ENCODE measurements at regions of chr20 and their contacts with region 1.

Region 1: GRCh38 chr20:39049684-39050554 is 87.8 kb downstream of the DHX35 start:
- DNase-seq: peak; percentile 43
- H3K4me3 ChIP-seq: peak overlapping the region; percentile 42 to 69 (median 63)
- H3K27ac ChIP-seq: no peak overlapping the region
- H3K4me1 ChIP-seq: peaks cover 8% of the 10 kb centered on the region
- H3K27me3 ChIP-seq: no peaks in the 10 kb centered on the region
- CTCF ChIP-seq: peak; percentile 83 to 97

Region 2: DNA sequence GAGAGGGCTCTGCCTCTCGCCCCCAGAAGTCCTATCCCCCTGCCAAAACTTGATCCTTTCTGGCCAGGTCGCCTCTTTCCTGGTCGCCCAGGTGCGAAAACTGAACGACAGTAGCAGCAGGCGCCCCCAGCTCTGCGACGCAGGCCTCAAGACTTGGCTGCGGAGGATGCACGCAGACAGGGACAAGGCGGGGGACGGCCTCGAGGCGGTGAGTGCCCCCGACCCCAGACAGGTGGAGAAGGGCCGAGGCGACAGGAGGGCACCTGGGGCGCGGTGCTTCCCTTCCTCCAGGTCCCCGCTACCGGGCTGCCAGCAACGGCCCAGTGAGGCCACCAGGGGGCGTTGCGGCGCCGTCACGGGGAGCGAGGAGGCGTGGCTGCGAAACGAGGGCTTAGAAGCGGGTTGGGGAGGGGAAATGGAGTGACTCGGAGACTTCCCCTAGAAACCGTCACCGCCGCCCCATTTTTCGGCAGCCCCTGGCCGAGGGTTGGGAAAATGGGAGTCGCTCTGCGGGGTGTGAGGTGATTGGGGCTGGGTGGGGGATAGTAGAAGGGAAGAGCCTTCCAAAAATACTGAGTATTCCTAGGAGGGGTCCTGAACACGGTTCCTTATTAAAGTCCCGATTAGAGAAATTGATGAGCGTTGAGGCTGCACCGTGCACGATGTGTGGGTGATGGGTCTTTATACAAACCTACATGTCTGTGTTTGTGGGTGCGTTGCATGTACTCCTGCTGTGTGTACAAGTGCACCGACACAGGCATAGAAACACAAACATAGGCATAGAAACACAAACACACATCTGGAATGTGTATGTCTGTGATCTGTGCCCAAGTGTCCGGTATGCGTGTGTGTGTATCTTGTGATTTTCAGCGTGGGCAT is 403.7 kb before region 1 on chr20:
- CTCF ChIA-PET with region 1: no interaction called
- dilution Hi-C with region 1: no loop called
- in situ Hi-C with region 1: loop called (anchors 25 kb)
- intact Hi-C with region 1: loop called (anchors 1 kb)
- DNase-seq: peak; percentile 53
- H3K4me3 ChIP-seq: peak overlapping the region in 2 of 3 experiments; percentile 23 to 34
- H3K27ac ChIP-seq: no peak overlapping the region
- H3K4me1 ChIP-seq: peaks cover 7% of the 10 kb centered on the region
- H3K27me3 ChIP-seq: no peaks in the 10 kb centered on the region
- CTCF ChIP-seq: peak; percentile 75 to 95

Region 3: DNA sequence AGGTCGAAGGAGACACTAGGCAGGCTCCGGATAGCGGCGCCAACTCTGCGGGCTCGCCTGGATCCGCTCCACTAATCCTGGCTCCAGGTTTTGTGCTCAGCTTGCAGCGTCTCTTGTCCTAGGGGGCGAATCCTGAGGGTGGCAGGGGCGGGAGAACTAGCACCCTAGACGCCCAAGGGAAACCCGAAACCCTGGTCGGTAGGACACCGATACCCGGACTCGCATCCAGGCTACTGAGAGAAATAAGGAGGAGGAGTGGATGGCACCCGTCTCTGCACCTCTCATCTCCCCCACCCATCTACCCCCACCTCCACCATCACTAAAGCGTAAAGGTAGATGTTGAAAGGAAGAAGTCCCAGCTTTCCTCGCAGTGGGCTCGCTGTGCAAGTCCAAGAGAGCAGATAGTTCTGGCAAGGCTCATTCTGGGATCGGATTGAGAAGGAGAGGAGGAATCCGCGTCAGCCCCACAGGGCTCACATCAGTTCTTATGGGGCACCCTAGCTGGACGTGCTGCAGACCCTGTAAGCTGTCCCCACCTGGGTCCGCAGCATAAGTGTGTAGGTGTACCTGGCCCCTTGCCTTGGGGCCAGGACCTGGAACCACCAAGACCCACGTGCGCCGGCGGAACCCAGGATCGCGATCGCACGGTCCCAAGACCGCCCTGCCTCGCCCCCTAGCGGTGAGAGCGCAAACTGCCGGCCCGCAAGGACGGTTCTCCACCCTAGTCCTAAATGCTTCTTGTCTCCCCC is 318.8 kb before region 1 on chr20:
- CTCF ChIA-PET with region 1: no interaction called
- dilution Hi-C with region 1: no loop called
- in situ Hi-C with region 1: no loop called
- intact Hi-C with region 1: loop called (anchors 2 kb)
- DNase-seq: peak; percentile 53
- H3K4me3 ChIP-seq: peak overlapping the region; percentile 14 to 32 (median 28)
- H3K27ac ChIP-seq: no peak overlapping the region
- H3K4me1 ChIP-seq: peaks cover 3% of the 10 kb centered on the region
- H3K27me3 ChIP-seq: peaks cover 46% of the 10 kb centered on the region
- CTCF ChIP-seq: peak; percentile 96 to 97

Region 4: GRCh38 chr20:38926142-38926933 is 123.6 kb before region 1 on chr20 and contains the start of gene FAM83D:
- CTCF ChIA-PET with region 1: no interaction called
- dilution Hi-C with region 1: no loop called
- in situ Hi-C with region 1: loop called (anchors 10 kb)
- intact Hi-C with region 1: loop called (anchors 1 kb)
- DNase-seq: peak; percentile 98
- H3K4me3 ChIP-seq: peak within 1 kb of the TSS; percentile 56 to 79 (median 77)
- H3K27ac ChIP-seq: peak within 1 kb of the TSS; percentile 41
- H3K4me1 ChIP-seq: peaks cover 11% of the 10 kb centered on the region
- H3K27me3 ChIP-seq: no peaks in the 10 kb centered on the region
- CTCF ChIP-seq: no peak
- total RNA-seq, gene FAM83D: 3.7 to 29.9 TPM

Region 5: GRCh38 chr20:38962044-38962927 is 87.6 kb before region 1 on chr20 and contains the start of gene DHX35:
- CTCF ChIA-PET with region 1: no interaction called
- dilution Hi-C with region 1: no loop called
- in situ Hi-C with region 1: no loop called
- intact Hi-C with region 1: loop called (anchors 1 kb)
- DNase-seq: peak; percentile 95
- H3K4me3 ChIP-seq: peak within 1 kb of the TSS; percentile 80 to 84 (median 83)
- H3K27ac ChIP-seq: peak within 1 kb of the TSS; percentile 76
- H3K4me1 ChIP-seq: peaks cover 7% of the 10 kb centered on the region
- H3K27me3 ChIP-seq: no peaks in the 10 kb centered on the region
- CTCF ChIP-seq: peak in 1 of 2 donors; percentile 56
- total RNA-seq, gene DHX35: 8.1 to 9.5 TPM

Region 6: DNA sequence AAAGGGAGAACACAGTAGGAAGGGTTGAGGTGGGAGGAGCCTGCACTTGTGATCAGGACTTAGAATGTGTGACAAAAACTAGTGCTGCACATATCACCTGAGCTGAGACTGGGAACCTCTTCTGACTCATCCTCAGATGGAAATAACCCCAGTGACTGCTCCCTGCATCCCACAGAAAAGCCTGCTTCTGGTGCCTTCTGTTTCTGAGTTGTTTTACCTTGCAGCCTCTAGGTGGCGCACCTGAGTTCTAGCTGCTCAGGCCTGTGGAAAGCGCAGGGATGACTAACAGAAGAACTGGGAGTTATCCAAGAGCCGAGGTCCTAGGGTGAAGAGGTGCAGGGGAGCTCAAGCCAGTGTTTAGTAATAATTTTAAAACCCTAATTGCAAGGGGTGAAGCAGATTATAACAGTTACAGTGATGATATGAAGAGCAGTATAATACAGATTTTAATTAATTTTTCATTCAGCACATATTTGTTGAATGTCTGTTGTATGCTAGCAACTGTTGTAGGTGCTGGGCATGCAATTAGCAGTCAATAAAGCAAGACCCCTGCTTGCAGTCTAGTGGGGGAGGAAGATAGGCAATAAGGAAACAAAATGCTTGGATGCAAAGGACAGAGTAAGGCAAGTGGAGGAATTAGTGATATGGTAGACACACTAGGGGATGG is 214.7 kb after region 1 on chr20:
- CTCF ChIA-PET with region 1: no interaction called
- dilution Hi-C with region 1: no loop called
- in situ Hi-C with region 1: no loop called
- intact Hi-C with region 1: loop called (anchors 5 kb)
- DNase-seq: peak; percentile 83
- H3K4me3 ChIP-seq: no peak overlapping the region
- H3K27ac ChIP-seq: no peak overlapping the region
- H3K4me1 ChIP-seq: no peaks in the 10 kb centered on the region
- H3K27me3 ChIP-seq: no peaks in the 10 kb centered on the region
- CTCF ChIP-seq: peak; percentile 92 to 97

Region 7: GRCh38 chr20:39338469-39339376 is 288.8 kb after region 1 on chr20:
- CTCF ChIA-PET with region 1: no interaction called
- dilution Hi-C with region 1: no loop called
- in situ Hi-C with region 1: no loop called
- intact Hi-C with region 1: no loop called
- DNase-seq: no peak
- H3K4me3 ChIP-seq: no peak overlapping the region
- H3K27ac ChIP-seq: no peak overlapping the region
- H3K4me1 ChIP-seq: no peaks in the 10 kb centered on the region
- H3K27me3 ChIP-seq: no peaks in the 10 kb centered on the region
- CTCF ChIP-seq: no peak

Measured in mammary epithelial cell (primary cell).